Gastrocnemius medialis (tissue), 4 donors: ENCODE measurements at regions of chr22 and their contacts with region 1.

Region 1: GRCh38 chr22:40346178-40347118 is at the start of gene ADSL:
- DNase-seq: peak; percentile 88 to 94
- ATAC-seq: peak; percentile 80 to 86
- H3K4me3 ChIP-seq: peak within 1 kb of the TSS; percentile 70 to 87 (median 76)
- H3K27ac ChIP-seq: peak within 1 kb of the TSS; percentile 90 to 98 (median 96)
- H3K4me1 ChIP-seq: peaks cover 50 to 61% of the 10 kb centered on the region in 2 donors
- H3K27me3 ChIP-seq: no peaks in the 10 kb centered on the region
- CTCF ChIP-seq: peak in 3 of 5 experiments; percentile 7 to 38 (median 29)
- POLR2A ChIP-seq: peak; percentile 98 to 99
- total RNA-seq, gene ADSL: 249 to 283 (median 262) TPM

Region 2: DNA sequence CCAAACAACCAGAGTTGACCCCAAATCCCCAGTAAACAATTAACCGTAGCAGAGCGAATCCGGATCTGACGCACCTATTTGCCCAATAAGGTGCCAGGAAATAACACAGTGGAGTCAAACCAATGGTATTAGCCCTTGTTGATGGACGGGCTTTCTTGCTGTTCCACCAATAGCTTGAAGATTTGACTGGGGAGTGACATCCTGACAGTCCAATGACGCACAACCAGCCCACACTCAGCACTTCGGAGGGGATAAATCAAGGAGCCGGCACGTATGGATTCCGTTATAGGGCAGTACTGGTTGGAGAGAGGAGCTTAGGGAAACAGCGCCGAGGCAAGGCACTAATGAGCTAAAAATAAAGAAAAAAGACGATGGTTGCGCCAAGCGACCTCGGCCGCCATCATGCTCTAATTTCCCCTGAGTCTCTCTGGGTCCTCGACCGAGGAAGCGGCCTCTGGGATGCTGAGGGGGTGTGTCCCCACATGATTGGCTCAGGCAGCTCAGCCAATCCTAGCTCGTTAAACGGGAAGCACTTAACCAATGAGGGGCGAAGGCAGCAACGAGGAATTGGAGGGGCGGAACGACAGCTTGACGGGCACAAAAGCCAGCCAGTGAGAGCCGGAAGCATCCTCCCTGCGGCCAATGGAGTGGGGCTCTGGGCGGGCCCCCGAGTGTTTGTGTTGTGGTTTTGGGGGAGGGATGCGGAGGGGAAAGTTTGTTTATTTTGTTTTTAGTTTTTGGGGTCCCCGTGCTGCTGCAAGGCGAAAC is 302.2 kb before region 1 on chr22:
- in situ Hi-C with region 1: loop called in 3 of 4 experiments (anchors 10 kb)
- intact Hi-C with region 1: loop called (anchors 1 kb)
- DNase-seq: peak; percentile 99
- ATAC-seq: peak; percentile 91 to 92
- H3K4me3 ChIP-seq: peak overlapping the region; percentile 72 to 86 (median 76)
- H3K27ac ChIP-seq: peak overlapping the region; percentile 91 to 98 (median 94)
- H3K4me1 ChIP-seq: peaks cover 41 to 47% of the 10 kb centered on the region in 2 donors
- H3K27me3 ChIP-seq: no peaks in the 10 kb centered on the region
- CTCF ChIP-seq: no peak
- POLR2A ChIP-seq: peak; percentile 72 to 92

Region 3: GRCh38 chr22:40177738-40178416 is 168.6 kb before region 1 on chr22 and contains the start of gene TNRC6B:
- in situ Hi-C with region 1: no loop called
- intact Hi-C with region 1: loop called (anchors 1 kb)
- DNase-seq: peak; percentile 88
- ATAC-seq: peak; percentile 96 to 97
- H3K4me3 ChIP-seq: peak within 1 kb of the TSS; percentile 62 to 86 (median 75)
- H3K27ac ChIP-seq: peak within 1 kb of the TSS; percentile 77 to 91 (median 88)
- H3K4me1 ChIP-seq: peaks cover 63 to 71% of the 10 kb centered on the region in 2 donors
- H3K27me3 ChIP-seq: no peaks in the 10 kb centered on the region
- CTCF ChIP-seq: peak in 3 of 5 experiments; percentile 7 to 15 (median 14)
- POLR2A ChIP-seq: peak; percentile 96 to 98
- total RNA-seq, gene TNRC6B: 31.9 to 76.7 (median 57.0) TPM

Region 4: GRCh38 chr22:40276996-40277823 is 69.2 kb before region 1 on chr22:
- in situ Hi-C with region 1: loop called in 1 of 4 experiments (anchors 10 kb)
- intact Hi-C with region 1: loop called (anchors 2 kb)
- DNase-seq: peak; percentile 78 to 88
- ATAC-seq: peak; percentile 96 to 97
- H3K4me3 ChIP-seq: peak overlapping the region; percentile 43 to 57 (median 51)
- H3K27ac ChIP-seq: peak overlapping the region; percentile 86 to 92 (median 88)
- H3K4me1 ChIP-seq: peaks cover 9 to 34% of the 10 kb centered on the region in 2 donors
- H3K27me3 ChIP-seq: no peaks in the 10 kb centered on the region
- CTCF ChIP-seq: no peak
- POLR2A ChIP-seq: peak; percentile 76 to 93

Region 5: DNA sequence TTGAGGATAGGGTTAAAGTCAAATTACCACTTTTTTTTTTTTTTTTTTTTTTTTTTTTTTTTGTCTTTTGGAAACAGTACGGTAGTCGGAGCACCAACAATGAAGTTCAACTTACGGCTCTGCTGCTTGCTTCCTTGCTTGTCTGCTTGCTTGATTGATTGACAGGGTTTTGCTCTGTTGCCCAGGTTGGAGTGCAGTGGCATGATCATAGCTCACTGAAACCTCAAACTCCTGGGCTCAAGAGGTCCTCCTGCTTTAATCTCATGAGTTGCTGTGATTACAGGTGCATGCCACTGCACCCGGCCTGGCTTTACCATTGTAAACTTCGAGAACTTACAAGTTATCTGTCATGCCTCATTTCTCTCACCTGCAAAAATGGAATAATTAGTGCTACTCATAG is 29.7 kb after region 1 on chr22:
- in situ Hi-C with region 1: no loop called
- intact Hi-C with region 1: no loop called
- DNase-seq: no peak
- ATAC-seq: peak in 1 of 2 donors; percentile 30
- H3K4me3 ChIP-seq: no peak overlapping the region
- H3K27ac ChIP-seq: no peak overlapping the region
- H3K4me1 ChIP-seq: peaks cover 7 to 15% of the 10 kb centered on the region in 2 donors
- H3K27me3 ChIP-seq: no peaks in the 10 kb centered on the region
- CTCF ChIP-seq: no peak
- POLR2A ChIP-seq: no peak

Region 6: DNA sequence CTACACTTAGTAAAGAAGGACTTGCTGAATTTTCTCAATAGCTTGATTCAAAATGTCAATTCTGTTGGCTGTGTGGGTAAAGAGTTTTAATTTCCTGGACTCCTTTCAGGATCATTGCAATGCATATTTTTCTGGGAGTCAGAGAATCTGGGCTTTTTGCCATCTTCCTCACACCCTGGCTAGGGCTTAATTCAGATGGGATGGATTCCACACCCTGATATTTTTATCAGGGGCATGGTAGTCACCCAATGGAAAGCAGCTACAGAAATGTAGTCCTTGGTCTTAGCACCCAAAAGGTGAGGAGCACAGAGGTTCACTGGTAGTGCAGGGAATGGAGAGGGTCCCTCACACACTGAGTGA is 103.2 kb after region 1 on chr22:
- in situ Hi-C with region 1: no loop called
- intact Hi-C with region 1: no loop called
- DNase-seq: no peak
- ATAC-seq: no peak
- H3K4me3 ChIP-seq: peak overlapping the region in 2 of 4 donors; percentile 38 to 42
- H3K27ac ChIP-seq: peak overlapping the region; percentile 63 to 77 (median 75)
- H3K4me1 ChIP-seq: peaks cover 43 to 48% of the 10 kb centered on the region in 2 donors
- H3K27me3 ChIP-seq: no peaks in the 10 kb centered on the region
- CTCF ChIP-seq: no peak
- POLR2A ChIP-seq: no peak

Region 7: GRCh38 chr22:40636380-40637182 is 290.1 kb after region 1 on chr22 and contains the start of gene MRTFA:
- in situ Hi-C with region 1: no loop called
- intact Hi-C with region 1: loop called (anchors 10 kb)
- DNase-seq: peak; percentile 100
- ATAC-seq: peak; percentile 96
- H3K4me3 ChIP-seq: peak within 1 kb of the TSS; percentile 72 to 96 (median 75)
- H3K27ac ChIP-seq: peak within 1 kb of the TSS; percentile 90 to 96 (median 92)
- H3K4me1 ChIP-seq: peaks cover 29 to 31% of the 10 kb centered on the region in 2 donors
- H3K27me3 ChIP-seq: no peaks in the 10 kb centered on the region
- CTCF ChIP-seq: no peak
- POLR2A ChIP-seq: peak; percentile 98 to 99
- total RNA-seq, gene MRTFA: 13.7 to 31.3 (median 22.2) TPM